Left ventricle myocardium inferior (tissue), 1 donor: ENCODE measurements at regions of chr1 and their contacts with region 1.

Region 1: GRCh38 chr1:203273206-203273868 is 32.0 kb upstream of the BTG2 start:
- DNase-seq: peak; percentile 85
- H3K4me3 ChIP-seq: peak overlapping the region; percentile 58
- H3K27ac ChIP-seq: peak overlapping the region; percentile 96
- H3K4me1 ChIP-seq: peaks cover 80% of the 10 kb centered on the region
- H3K27me3 ChIP-seq: no peaks in the 10 kb centered on the region
- CTCF ChIP-seq: peak; percentile 99

Region 2: DNA sequence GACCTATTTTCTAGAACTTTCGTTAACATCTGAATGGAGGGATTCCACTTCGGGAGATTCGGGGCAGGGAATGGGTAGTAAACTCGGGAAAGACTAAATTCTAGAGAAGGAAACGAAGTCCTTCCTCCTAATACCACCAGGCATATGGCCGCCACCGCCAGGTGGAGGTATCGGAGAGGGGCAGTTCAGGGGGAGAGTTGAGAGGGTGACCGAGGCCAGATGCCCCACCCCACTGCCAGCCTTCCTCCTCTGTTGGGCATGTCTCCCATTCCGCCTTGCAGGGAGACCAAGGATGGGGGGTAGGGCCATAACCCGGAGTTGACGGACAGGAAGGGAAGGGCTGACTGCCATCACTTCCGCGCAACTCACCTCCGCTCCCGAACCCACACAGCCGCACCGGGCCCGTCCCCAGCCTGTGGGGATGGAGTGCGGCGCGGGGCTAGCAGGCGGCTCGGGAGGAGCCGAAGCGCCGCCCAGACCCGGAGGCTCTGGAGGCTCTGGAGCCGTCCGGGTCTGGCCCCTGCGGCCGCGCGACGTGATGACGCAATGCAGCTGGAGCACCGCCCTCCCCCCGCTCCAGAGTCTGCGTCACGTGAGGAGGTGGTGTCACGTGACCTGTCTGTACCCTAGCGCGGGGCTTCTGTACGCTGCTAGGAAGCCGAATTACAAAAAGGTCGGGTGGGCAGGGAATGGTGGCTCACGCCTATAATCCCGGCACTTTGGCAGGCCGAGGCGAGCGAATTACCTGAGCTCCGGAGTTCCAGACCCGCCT is 346.4 kb before region 1 on chr1 and contains the start of gene KLHL12:
- intact Hi-C with region 1: no loop called
- DNase-seq: peak; percentile 97
- H3K4me3 ChIP-seq: peak within 1 kb of the TSS; percentile 97
- H3K27ac ChIP-seq: peak within 1 kb of the TSS; percentile 96
- H3K4me1 ChIP-seq: peaks cover 46% of the 10 kb centered on the region
- H3K27me3 ChIP-seq: no peaks in the 10 kb centered on the region
- CTCF ChIP-seq: peak; percentile 66
- total RNA-seq, gene KLHL12: 22.7 TPM

Region 3: GRCh38 chr1:203304919-203305808 is 31.8 kb after region 1 on chr1 and contains the start of gene BTG2:
- intact Hi-C with region 1: loop called (anchors 5 kb)
- DNase-seq: peak; percentile 95
- H3K4me3 ChIP-seq: peak within 1 kb of the TSS; percentile 94
- H3K27ac ChIP-seq: peak within 1 kb of the TSS; percentile 99
- H3K4me1 ChIP-seq: peaks cover 60% of the 10 kb centered on the region
- H3K27me3 ChIP-seq: no peaks in the 10 kb centered on the region
- CTCF ChIP-seq: no peak
- total RNA-seq, gene BTG2: 73.7 TPM

Region 4: DNA sequence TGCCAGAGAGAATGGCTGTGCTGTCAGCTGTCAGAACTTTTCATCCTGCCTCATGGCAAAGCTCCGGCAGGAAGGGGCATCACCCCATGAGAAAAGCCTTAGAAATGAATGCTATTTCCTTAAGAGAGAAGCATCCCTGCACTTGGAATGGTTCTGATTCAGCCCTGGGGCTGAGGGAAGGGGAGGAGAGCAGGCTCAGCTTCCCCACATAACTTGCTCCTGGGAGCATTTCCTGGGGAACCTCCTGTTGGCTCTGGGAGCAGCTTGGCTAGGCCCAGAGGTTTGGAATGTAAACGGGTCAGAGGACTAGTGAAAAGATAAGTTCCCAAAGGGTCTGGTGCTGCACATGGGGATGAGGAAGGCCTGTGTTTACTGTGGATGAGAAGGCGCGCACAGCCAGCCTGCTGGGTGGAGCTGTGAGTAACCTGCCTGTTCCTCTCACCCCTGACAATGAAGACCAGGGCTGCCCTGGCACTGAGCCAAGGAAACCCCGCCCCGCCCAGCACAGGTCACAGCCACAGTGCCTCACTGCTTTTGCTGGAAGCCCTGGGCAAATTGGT is 207.3 kb after region 1 on chr1:
- intact Hi-C with region 1: loop called (anchors 10 kb)
- DNase-seq: peak; percentile 55
- H3K4me3 ChIP-seq: peak overlapping the region; percentile 62
- H3K27ac ChIP-seq: peak overlapping the region; percentile 80
- H3K4me1 ChIP-seq: peaks cover 30% of the 10 kb centered on the region
- H3K27me3 ChIP-seq: peaks cover 4% of the 10 kb centered on the region
- CTCF ChIP-seq: no peak

Region 5: GRCh38 chr1:203497269-203497777 is 224.0 kb after region 1 on chr1:
- intact Hi-C with region 1: no loop called
- DNase-seq: no peak
- H3K4me3 ChIP-seq: no peak overlapping the region
- H3K27ac ChIP-seq: no peak overlapping the region
- H3K4me1 ChIP-seq: no peaks in the 10 kb centered on the region
- H3K27me3 ChIP-seq: no peaks in the 10 kb centered on the region
- CTCF ChIP-seq: no peak